Natural killer cell (primary cell): ENCODE measurements at regions of chr20 and their contacts with region 1.

Region 1: DNA sequence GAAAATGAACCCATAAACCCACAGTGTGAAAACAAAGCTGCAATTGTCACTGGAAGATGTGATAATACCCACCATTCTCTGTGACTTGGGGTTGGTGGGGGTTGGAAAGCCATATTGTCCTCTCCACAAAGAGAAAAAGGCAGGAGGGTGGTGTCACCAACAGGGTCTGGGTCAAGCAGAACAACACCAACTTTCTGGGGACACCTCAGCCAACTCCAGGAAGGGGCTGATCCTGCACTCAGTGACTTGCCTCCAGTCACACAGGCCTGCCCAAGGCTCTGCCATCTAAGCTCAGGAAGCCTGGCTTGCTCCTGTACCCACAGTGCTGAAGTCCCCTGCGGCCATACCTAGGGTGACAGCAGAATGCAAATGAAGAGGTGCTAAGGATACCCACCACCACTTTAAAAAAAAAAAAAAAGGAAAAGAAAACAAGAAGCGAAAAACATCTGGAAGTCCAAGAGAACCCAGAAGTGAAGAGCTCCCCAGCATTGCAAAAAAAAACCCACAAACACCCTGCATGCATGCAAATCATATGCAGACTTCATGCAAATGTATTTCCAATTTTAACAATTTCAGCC is 110.6 kb downstream of the PREX1 start:
- DNase-seq: peak; percentile 35 to 38
- ATAC-seq: peak; percentile 16 to 39 (median 36)
- H3K4me3 ChIP-seq: no peak overlapping the region
- H3K4me3 Mint-ChIP-seq: peak overlapping the region; percentile 88
- H3K27ac ChIP-seq: peak overlapping the region; percentile 73
- H3K27ac Mint-ChIP-seq: peak overlapping the region; percentile 91 to 95
- H3K4me1 ChIP-seq: peaks cover 87% of the 10 kb centered on the region
- H3K4me1 Mint-ChIP-seq: peaks cover 91 to 95% of the 10 kb centered on the region in 2 donors
- H3K27me3 ChIP-seq: no peaks in the 10 kb centered on the region
- H3K27me3 Mint-ChIP-seq: no peaks in the 10 kb centered on the region
- CTCF ChIP-seq: no peak

Region 2: GRCh38 chr20:48689411-48689810 is 27.8 kb before region 1 on chr20:
- intact Hi-C with region 1: loop called (anchors 2 kb)
- DNase-seq: peak; percentile 34 to 51
- ATAC-seq: peak; percentile 29 to 79 (median 62)
- H3K4me3 ChIP-seq: no peak overlapping the region
- H3K4me3 Mint-ChIP-seq: peak overlapping the region; percentile 82
- H3K27ac ChIP-seq: peak overlapping the region; percentile 16
- H3K27ac Mint-ChIP-seq: peak overlapping the region; percentile 75 to 85
- H3K4me1 ChIP-seq: peaks cover 77% of the 10 kb centered on the region
- H3K4me1 Mint-ChIP-seq: peaks cover 68 to 82% of the 10 kb centered on the region in 2 donors
- H3K27me3 ChIP-seq: no peaks in the 10 kb centered on the region
- H3K27me3 Mint-ChIP-seq: no peaks in the 10 kb centered on the region
- CTCF ChIP-seq: no peak

Region 3: DNA sequence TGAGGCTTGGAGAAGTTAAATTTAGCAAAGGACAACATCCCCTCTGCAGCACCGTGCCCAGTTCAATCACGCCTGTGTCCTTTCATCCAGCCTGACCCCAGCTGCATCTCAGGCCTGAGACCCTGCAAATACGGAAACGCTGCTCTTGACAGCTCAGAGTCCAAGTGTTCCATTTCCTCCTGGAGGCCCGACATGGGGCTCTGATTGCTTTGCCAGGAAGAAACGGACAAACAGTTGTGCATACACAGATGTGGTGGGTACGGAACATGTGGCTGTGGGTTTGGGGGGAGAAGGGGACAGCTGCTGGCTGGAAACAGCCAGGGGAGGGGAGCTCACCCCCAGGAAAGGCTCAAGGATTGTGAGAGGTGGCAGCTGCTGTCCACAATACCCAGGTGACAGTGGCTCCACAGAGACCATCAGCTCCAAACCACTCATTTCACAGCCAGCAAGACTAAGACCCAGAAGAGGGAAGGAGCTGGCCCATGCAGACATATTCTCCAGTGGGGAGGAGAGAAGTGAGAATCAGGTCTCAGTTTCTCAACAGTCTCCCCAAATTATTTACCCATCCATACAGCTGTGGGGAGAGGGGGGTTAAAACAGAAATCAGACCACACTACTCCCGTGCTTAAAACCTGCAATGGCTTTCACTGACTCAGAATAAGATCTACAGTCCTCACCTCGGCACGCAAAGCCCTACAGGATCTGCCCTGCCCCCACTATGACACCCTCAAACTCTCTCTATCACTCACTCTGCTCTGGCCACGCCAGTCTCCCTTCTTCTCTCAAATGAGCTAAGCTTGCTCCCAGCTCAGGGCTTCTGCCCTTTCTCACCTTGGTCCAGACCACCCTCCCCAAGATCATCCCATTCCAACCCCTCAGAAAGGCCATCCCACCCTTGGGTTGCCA is 21.5 kb after region 1 on chr20:
- intact Hi-C with region 1: loop called (anchors 1 kb)
- DNase-seq: peak; percentile 63 to 64
- ATAC-seq: peak; percentile 81 to 86 (median 85)
- H3K4me3 ChIP-seq: no peak overlapping the region
- H3K4me3 Mint-ChIP-seq: peak overlapping the region; percentile 83
- H3K27ac ChIP-seq: peak overlapping the region; percentile 13
- H3K27ac Mint-ChIP-seq: peak overlapping the region; percentile 89 to 91
- H3K4me1 ChIP-seq: peaks cover 61% of the 10 kb centered on the region
- H3K4me1 Mint-ChIP-seq: peaks cover 69 to 73% of the 10 kb centered on the region in 2 donors
- H3K27me3 ChIP-seq: no peaks in the 10 kb centered on the region
- H3K27me3 Mint-ChIP-seq: no peaks in the 10 kb centered on the region
- CTCF ChIP-seq: no peak

Region 4: DNA sequence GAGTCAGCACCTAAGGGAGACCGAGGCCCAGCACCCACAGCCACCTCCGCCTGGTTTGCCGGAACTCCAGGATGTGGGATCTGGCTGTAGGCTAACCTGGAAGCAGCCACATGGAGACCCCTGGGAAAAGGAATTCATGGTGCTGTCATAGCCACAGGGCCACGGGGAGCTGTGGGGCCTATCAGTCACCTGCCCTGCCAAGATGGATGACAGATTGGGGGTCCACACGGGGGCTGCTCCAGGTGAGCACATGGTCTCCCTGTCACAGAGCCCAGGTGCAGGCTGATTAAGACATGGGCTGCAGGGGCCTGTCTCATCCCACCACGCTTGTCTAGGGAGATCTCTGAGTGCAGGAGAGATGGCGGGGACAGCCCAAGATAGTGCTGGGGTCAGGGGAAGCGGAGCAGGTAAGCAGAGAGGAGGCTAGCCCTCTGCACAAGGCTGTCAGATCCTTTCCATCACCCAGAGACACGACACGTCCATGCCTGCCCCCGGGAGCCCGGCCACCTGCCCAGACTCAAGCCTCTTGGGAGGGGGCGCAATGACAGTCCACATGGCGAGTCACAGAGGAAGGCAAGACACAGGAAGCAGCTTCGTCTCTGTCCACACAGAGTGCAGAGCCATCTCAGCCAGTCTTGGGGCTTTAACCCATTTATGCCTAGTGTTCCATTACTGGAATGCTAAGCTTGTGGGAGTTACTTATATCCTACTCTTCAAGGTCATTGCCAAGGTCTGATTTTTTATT is 32.1 kb after region 1 on chr20:
- intact Hi-C with region 1: no loop called
- DNase-seq: no peak
- ATAC-seq: peak in 2 of 3 donors; percentile 19 to 25
- H3K4me3 ChIP-seq: no peak overlapping the region
- H3K4me3 Mint-ChIP-seq: peak overlapping the region; percentile 86
- H3K27ac ChIP-seq: peak overlapping the region; percentile 19
- H3K27ac Mint-ChIP-seq: peak overlapping the region in 1 of 2 donors; percentile 95
- H3K4me1 ChIP-seq: peaks cover 74% of the 10 kb centered on the region
- H3K4me1 Mint-ChIP-seq: peaks cover 75 to 79% of the 10 kb centered on the region in 2 donors
- H3K27me3 ChIP-seq: no peaks in the 10 kb centered on the region
- H3K27me3 Mint-ChIP-seq: no peaks in the 10 kb centered on the region
- CTCF ChIP-seq: no peak

Region 5: DNA sequence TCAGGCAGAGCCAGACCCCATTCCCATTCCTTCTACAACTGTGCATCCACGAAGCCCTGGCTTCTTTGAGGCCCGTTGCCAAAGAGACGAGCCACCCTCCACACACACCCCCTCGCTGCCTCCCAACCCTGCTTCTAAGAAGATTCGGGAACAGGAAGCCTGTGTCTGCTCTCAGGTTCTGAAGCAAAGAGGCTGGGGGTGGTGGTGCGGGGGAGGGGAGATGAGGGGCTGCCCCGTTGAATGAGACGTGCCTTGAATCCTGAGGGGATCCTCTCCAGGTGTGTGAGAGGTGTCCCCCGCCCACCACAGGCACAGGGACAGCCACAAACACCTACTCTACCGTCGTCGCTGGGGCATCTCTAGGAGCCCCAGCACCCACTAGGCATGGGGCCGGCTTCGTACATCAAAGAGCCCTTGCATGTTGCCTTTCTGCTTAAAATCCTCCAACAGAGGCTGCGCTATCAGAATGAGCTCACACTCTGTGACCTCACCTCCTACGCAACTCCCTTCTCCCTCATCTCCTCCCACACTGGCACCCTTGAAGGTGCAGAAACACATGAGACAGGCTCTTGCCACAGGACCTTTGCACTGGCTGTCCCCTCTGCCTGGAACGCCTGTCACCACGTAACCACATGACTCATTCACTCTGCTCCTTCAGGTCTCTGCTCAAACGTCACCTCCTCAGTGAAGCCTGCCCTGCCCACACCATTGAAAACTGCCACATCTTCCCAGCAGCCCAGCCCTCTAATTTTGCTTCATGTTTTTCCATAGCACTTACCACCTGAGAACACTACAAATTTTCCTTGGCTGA is 52.1 kb after region 1 on chr20:
- intact Hi-C with region 1: loop called (anchors 2 kb)
- DNase-seq: peak; percentile 84 to 94
- ATAC-seq: peak; percentile 80 to 93 (median 88)
- H3K4me3 ChIP-seq: no peak overlapping the region
- H3K4me3 Mint-ChIP-seq: peak overlapping the region; percentile 55
- H3K27ac ChIP-seq: peak overlapping the region; percentile 86
- H3K27ac Mint-ChIP-seq: no peak overlapping the region
- H3K4me1 ChIP-seq: peaks cover 97% of the 10 kb centered on the region
- H3K4me1 Mint-ChIP-seq: peaks cover 92 to 93% of the 10 kb centered on the region in 2 donors
- H3K27me3 ChIP-seq: no peaks in the 10 kb centered on the region
- H3K27me3 Mint-ChIP-seq: no peaks in the 10 kb centered on the region
- CTCF ChIP-seq: no peak